Mucosa of descending colon (tissue), 3 donors: ENCODE measurements at regions of chr22 and their contacts with region 1.

Region 1: GRCh38 chr22:30104501-30105156 is 24.4 kb downstream of the HORMAD2 start:
- DNase-seq: no peak
- ATAC-seq: no peak
- H3K4me3 ChIP-seq: no peak overlapping the region
- H3K4me1 ChIP-seq: no peaks in the 10 kb centered on the region
- CTCF ChIP-seq: no peak

Region 2: GRCh38 chr22:30254314-30254713 is 149.7 kb after region 1 on chr22:
- intact Hi-C with region 1: loop called in 1 of 2 experiments (anchors 2 kb)
- DNase-seq: no peak
- ATAC-seq: no peak
- H3K4me3 ChIP-seq: no peak overlapping the region
- H3K4me1 ChIP-seq: peaks cover 26% of the 10 kb centered on the region
- CTCF ChIP-seq: no peak

Region 3: GRCh38 chr22:30289134-30289979 is 184.7 kb after region 1 on chr22 and contains the start of gene CASTOR1:
- intact Hi-C with region 1: loop called in 1 of 2 experiments (anchors 5 kb)
- DNase-seq: peak; percentile 94 to 99 (median 98)
- ATAC-seq: peak; percentile 87
- H3K4me3 ChIP-seq: peak within 1 kb of the TSS; percentile 59
- H3K4me1 ChIP-seq: peaks cover 20% of the 10 kb centered on the region
- CTCF ChIP-seq: no peak
- total RNA-seq, gene CASTOR1: 6.1 to 8.4 (median 7.6) TPM